ENCODE measurements at regions of chr16 and their contacts with region 1.

Region 1: DNA sequence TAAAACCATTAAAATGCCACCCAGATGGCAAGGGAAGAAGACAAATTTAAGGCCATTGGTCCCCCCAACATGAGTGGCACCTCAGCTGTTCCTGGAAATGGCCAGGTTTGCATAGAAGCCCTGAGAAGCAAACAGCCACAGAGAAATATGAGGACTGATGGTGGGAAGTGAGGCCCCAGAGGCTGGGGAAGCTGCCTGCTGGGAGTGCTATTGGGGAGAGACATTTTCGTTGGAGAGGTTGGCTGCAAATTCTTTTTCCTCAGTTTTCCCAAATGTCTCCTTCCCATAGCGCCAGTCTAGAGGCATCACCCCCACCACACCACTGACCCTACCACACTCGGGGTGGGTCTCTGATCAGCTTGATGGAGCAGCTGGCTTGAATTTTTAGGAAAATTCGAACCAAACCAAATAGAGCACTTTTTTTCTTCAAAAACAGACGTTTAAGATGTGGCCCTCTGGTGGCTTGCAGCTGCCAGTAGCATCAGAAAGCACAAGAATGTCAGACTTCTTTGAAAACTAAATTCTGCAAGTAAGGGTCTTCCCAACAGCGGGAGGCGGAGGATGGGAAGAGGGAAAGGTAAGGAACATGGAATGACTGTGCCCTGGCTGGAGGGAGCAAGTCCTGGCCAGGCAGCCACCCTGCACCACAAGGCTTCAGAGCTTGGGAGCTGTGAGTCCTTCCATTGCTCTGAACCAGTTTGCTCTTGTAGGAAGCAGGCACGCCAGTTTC is 13.2 kb upstream of the SLC12A3 start:
- DNase-seq: peak; percentile 22
- H3K4me3 ChIP-seq: no peak overlapping the region
- H3K27ac ChIP-seq: no peak overlapping the region
- H3K4me1 ChIP-seq: peaks cover 32% of the 10 kb centered on the region
- H3K27me3 ChIP-seq: no peaks in the 10 kb centered on the region
- CTCF ChIP-seq: peak; percentile 34 to 44
- POLR2A ChIP-seq: no peak

Region 2: DNA sequence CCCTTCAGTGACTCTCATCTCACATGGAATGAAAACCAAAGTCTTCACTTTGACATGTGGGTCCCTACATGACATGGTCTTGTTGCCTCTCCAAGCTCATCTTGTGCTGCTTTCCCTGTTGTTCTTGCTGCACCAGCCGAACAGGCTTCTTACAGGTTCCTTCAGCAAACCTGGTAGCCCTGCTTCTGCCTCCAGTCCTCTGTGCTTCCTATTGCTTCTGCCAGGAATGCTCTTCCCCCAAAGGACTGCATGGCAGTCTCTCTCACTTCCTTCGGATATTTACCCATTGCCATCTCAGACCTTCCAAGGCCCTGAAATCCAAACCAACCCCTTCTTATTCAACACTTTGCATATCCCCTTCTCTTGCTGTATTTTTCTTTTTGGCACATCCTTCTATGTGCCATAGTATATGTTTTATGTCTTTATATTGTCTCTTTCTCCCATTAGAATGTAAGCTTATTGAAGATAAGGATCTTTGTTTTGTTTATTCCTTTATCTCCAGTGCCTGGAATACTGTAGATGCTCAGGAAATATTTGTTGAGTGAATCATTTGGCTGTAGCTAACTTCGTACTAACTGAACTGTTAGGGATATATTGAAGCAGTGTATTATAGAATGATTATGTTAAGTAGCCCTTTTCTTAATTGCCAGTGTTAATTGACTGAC is 44.7 kb before region 1 on chr16:
- CTCF ChIA-PET with region 1: interaction called, 5 read pairs
- POLR2A ChIA-PET with region 1: no interaction called
- dilution Hi-C with region 1: no loop called
- intact Hi-C with region 1: loop called (anchors 2 kb)
- DNase-seq: peak; percentile 81
- H3K4me3 ChIP-seq: peak overlapping the region in 1 of 3 experiments; percentile 8
- H3K27ac ChIP-seq: peak overlapping the region; percentile 58
- H3K4me1 ChIP-seq: peaks cover 22% of the 10 kb centered on the region
- H3K27me3 ChIP-seq: no peaks in the 10 kb centered on the region
- CTCF ChIP-seq: no peak
- POLR2A ChIP-seq: no peak

Region 3: DNA sequence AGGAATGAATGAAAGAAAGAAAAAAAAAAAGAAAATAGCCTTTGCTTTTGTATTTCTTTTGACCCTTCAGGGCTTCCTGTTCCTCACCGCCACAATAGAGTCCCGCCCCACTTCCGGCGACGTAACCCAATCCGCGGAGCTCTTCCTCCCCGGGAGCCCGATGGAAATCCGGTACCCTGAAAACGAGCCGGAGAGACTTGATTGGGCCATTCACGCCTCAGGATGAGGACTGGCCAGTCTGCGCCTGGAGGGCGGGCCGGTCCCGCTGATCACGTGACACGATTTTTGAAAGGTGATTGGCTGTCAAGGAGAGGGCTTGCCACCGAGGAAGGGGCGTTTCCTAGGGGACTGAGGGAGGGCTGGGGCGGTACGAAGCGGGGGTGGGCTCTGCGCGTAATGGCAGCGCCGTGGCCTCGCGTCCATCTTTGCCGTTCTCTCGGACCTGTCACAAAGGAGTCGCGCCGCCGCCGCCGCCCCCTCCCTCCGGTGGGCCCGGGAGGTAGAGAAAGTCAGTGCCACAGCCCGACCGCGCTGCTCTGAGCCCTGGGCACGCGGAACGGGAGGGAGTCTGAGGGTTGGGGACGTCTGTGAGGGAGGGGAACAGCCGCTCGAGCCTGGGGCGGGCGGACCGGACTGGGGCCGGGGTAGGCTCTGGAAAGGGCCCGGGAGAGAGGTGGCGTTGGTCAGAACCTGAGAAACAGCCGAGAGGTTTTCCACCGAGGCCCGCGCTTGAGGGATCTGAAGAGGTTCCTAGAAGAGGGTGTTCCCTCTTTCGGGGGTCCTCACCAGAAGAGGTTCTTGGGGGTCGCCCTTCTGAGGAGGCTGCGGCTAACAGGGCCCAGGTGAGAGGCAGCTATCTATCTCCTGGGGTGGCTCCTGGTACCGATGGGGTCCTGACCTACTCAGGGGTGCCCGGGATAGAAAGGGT is 334.4 kb after region 1 on chr16 and contains the starts of genes PSME3IP1 and RSPRY1:
- CTCF ChIA-PET with region 1: no interaction called
- POLR2A ChIA-PET with region 1: no interaction called
- dilution Hi-C with region 1: no loop called
- intact Hi-C with region 1: no loop called
- DNase-seq: peak; percentile 100
- H3K4me3 ChIP-seq: peak within 1 kb of the TSS; percentile 88 to 95 (median 89)
- H3K27ac ChIP-seq: peak within 1 kb of the TSS; percentile 89
- H3K4me1 ChIP-seq: peaks cover 34% of the 10 kb centered on the region
- H3K27me3 ChIP-seq: no peaks in the 10 kb centered on the region
- CTCF ChIP-seq: no peak
- POLR2A ChIP-seq: peak; percentile 85
- total RNA-seq, gene PSME3IP1: 91.8 and 98.2 TPM in 2 replicates
- total RNA-seq, gene RSPRY1: 55.1 and 55.8 TPM in 2 replicates